ENCODE measurements at regions of chr14 and their contacts with region 1.

Region 1: DNA sequence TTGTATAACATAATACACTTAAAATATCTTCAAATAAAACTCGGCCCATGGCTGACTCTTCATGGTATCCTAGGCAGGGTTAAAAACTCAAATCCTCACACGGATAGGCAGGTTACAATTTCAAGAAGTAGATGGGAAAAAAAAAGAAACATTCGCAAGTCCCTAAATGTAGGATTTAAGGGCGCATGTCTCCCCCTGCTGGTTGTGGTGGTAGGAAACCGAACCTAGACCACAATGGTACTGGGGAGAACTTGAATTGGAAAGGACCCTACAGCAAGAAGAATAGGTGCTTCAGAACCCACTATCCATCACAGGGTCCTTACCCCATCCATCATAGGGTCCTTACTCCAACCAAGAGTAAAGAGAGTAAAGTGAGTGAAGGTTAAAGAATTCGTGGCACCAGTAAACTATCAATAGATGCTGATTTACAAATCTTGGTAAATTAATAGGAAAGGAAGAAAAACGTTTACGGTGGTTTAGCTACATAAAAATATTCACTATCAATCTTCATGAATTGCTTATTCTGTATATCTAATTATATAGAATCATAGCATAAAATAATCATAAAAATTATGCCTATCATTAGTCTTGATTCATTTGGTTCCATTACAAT is 3.3 kb upstream of the CIPC start:
- DNase-seq: peak; percentile 83 to 93
- H3K4me3 ChIP-seq: no peak overlapping the region
- H3K27ac ChIP-seq: peak overlapping the region in 1 of 5 donors; percentile 14
- H3K4me1 ChIP-seq: peaks cover 16 to 36% (median 27%) of the 10 kb centered on the region in 4 donors
- H3K27me3 ChIP-seq: no peaks in the 10 kb centered on the region
- CTCF ChIP-seq: peak in 5 of 7 experiments; percentile 58 to 80 (median 70)
- EP300 ChIP-seq: no peak
- POLR2A ChIP-seq: no peak

Region 2: GRCh38 chr14:77124345-77125280 is 29.8 kb after region 1 on chr14:
- intact Hi-C with region 1: loop called (anchors 5 kb)
- DNase-seq: peak; percentile 72 to 83
- H3K4me3 ChIP-seq: peak overlapping the region; percentile 51 to 58 (median 56)
- H3K27ac ChIP-seq: peak overlapping the region in 4 of 5 donors; percentile 45 to 82 (median 60)
- H3K4me1 ChIP-seq: peaks cover 25 to 52% (median 39%) of the 10 kb centered on the region in 4 donors
- H3K27me3 ChIP-seq: peaks cover 0 to 43% (median 6%) of the 10 kb centered on the region in 3 donors
- CTCF ChIP-seq: peak in 3 of 7 experiments; percentile 55 to 86 (median 74)
- EP300 ChIP-seq: no peak
- POLR2A ChIP-seq: no peak

Region 3: DNA sequence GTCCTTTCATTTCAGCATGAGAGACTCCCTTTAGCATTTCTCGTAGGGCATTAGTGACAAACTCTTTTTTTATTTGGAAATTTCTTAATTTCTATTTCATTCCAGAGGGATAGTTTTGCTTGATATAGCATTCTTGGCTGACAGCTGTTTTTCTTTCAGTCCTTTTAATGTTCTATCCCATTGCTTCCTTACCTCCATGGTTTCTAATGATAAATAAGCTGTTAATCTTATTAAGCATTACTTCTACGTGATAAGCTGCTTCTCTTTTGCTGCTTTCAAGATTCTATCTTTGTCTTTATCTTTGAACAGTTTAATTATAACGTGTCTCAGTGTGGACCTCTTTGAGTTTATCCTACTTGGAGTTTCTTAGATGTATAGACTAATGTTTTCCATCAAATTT is 75.3 kb after region 1 on chr14:
- intact Hi-C with region 1: no loop called
- DNase-seq: no peak
- H3K4me3 ChIP-seq: no peak overlapping the region
- H3K27ac ChIP-seq: no peak overlapping the region
- H3K4me1 ChIP-seq: no peaks in the 10 kb centered on the region
- H3K27me3 ChIP-seq: no peaks in the 10 kb centered on the region
- CTCF ChIP-seq: no peak
- EP300 ChIP-seq: no peak
- POLR2A ChIP-seq: no peak